ENCODE measurements at regions of chr6 and their contacts with region 1.

Region 1: GRCh38 chr6:31958741-31959739 is at the starts of genes NELFE and SKIC2:
- DNase-seq: peak; percentile 98
- ATAC-seq: peak; percentile 98 to 100 (median 100)
- H3K4me3 ChIP-seq: peak within 1 kb of the TSS; percentile 60 to 99 (median 90)
- H3K27ac ChIP-seq: peak within 1 kb of the TSS; percentile 54 to 95 (median 90)
- H3K4me1 ChIP-seq: peaks cover 6 to 27% (median 20%) of the 10 kb centered on the region in 9 donors
- H3K27me3 ChIP-seq: no peaks in the 10 kb centered on the region
- CTCF ChIP-seq: no peak
- total RNA-seq, gene NELFE: 38.2 to 52.8 (median 45.7) TPM
- total RNA-seq, gene SKIC2: 21.8 to 45.5 (median 32.2) TPM

Region 2: GRCh38 chr6:31541658-31542521 is 417.1 kb before region 1 on chr6 and contains the start of gene DDX39B:
- intact Hi-C with region 1: loop called in 3 of 10 experiments (anchors 10 kb)
- DNase-seq: peak; percentile 93 to 96
- ATAC-seq: peak; percentile 93 to 96 (median 94)
- H3K4me3 ChIP-seq: peak within 1 kb of the TSS; percentile 42 to 87 (median 73)
- H3K27ac ChIP-seq: peak within 1 kb of the TSS; percentile 81 to 100 (median 93)
- H3K4me1 ChIP-seq: peaks cover 22 to 55% (median 41%) of the 10 kb centered on the region in 9 donors
- H3K27me3 ChIP-seq: no peaks in the 10 kb centered on the region
- CTCF ChIP-seq: no peak
- total RNA-seq, gene DDX39B: 154 to 193 (median 172) TPM

Region 3: GRCh38 chr6:31922942-31923341 is 36.1 kb before region 1 on chr6:
- intact Hi-C with region 1: no loop called
- DNase-seq: no peak
- ATAC-seq: no peak
- H3K4me3 ChIP-seq: no peak overlapping the region
- H3K27ac ChIP-seq: no peak overlapping the region
- H3K4me1 ChIP-seq: peaks cover 0 to 10% (median 0%) of the 10 kb centered on the region in 9 donors
- H3K27me3 ChIP-seq: no peaks in the 10 kb centered on the region
- CTCF ChIP-seq: peak in 3 of 9 donors; percentile 20 to 24 (median 24)

Region 4: GRCh38 chr6:31971993-31972708 is 13.1 kb after region 1 on chr6 and contains the start of gene DXO:
- intact Hi-C with region 1: loop called in 3 of 10 experiments (anchors 1 kb)
- DNase-seq: peak; percentile 92 to 97
- ATAC-seq: peak; percentile 95 to 97 (median 96)
- H3K4me3 ChIP-seq: peak within 1 kb of the TSS; percentile 59 to 96 (median 74)
- H3K27ac ChIP-seq: peak within 1 kb of the TSS; percentile 87 to 96 (median 94)
- H3K4me1 ChIP-seq: peaks cover 6 to 31% (median 24%) of the 10 kb centered on the region in 9 donors
- H3K27me3 ChIP-seq: no peaks in the 10 kb centered on the region
- CTCF ChIP-seq: no peak
- total RNA-seq, gene DXO: 8.4 to 15.7 (median 13.2) TPM

Region 5: DNA sequence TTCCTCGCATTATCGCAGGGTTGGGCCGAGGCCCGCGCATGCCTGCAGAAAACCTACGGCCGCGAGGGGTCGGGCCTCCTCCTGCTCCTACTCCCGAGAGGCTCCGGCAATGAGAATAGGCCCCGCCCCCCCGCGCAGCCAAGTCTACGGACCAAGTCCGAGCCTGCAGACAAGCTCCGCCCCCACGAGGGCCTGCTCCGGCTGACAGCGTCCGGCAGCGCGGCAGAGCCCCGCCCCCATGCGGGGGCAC is 236.5 kb after region 1 on chr6:
- intact Hi-C with region 1: loop called in 1 of 10 experiments (anchors 1 kb)
- DNase-seq: peak; percentile 100
- ATAC-seq: peak in 6 of 8 donors; percentile 85 to 95 (median 86)
- H3K4me3 ChIP-seq: peak overlapping the region in 7 of 10 donors; percentile 65 to 79 (median 75)
- H3K27ac ChIP-seq: peak overlapping the region; percentile 98 to 100 (median 99)
- H3K4me1 ChIP-seq: peaks cover 11 to 68% (median 52%) of the 10 kb centered on the region in 9 donors
- H3K27me3 ChIP-seq: no peaks in the 10 kb centered on the region
- CTCF ChIP-seq: peak; percentile 45 to 82 (median 64)

Measured in heart right ventricle (tissue), 16 donors.